Vagina (tissue), 2 donors: ENCODE measurements at regions of chr1 and their contacts with region 1.

Region 1: DNA sequence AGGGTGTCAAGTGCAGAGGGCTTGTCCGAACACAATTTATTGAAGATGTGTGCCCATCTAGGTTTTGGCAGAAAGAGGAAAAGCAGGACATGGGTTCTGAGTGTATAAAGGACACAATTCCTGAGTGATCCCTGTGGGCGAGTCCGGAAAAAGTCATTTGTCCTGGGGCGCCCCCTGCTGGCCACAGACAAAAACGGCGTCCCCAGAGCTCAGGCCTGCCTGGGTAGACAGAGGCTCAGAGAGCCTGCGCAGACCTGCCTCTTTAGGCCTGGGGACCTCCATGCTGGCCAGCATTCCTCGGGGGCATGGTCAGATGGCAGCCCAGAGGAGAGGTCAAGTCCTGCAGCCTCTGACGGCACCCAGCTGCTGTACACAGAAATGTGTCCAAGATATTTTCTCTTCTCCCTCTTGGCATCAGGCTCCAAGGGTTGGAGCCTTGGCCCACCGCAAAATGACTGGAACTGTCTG is 65.5 kb upstream of the LRP8 start:
- DNase-seq: no peak
- H3K4me3 ChIP-seq: no peak overlapping the region
- H3K27ac ChIP-seq: no peak overlapping the region
- H3K4me1 ChIP-seq: no peaks in the 10 kb centered on the region
- H3K27me3 ChIP-seq: no peaks in the 10 kb centered on the region
- CTCF ChIP-seq: peak; percentile 87 to 96 (median 89)
- POLR2A ChIP-seq: no peak

Region 2: GRCh38 chr1:53278201-53278725 is 115.1 kb before region 1 on chr1:
- intact Hi-C with region 1: loop called (anchors 2 kb)
- DNase-seq: no peak
- H3K4me3 ChIP-seq: no peak overlapping the region
- H3K27ac ChIP-seq: no peak overlapping the region
- H3K4me1 ChIP-seq: no peaks in the 10 kb centered on the region
- H3K27me3 ChIP-seq: no peaks in the 10 kb centered on the region
- CTCF ChIP-seq: peak; percentile 76 to 85 (median 77)
- POLR2A ChIP-seq: no peak